Activated B cell treated with CpG ODN at 0.5 μM for 24 hours (primary cell): ENCODE measurements at regions of chr4 and their contacts with region 1.

Region 1: GRCh38 chr4:38675146-38676121 is 11.4 kb downstream of the KLF3 start:
- DNase-seq: peak; percentile 56
- ATAC-seq: peak; percentile 75
- H3K4me3 Mint-ChIP-seq: peak overlapping the region; percentile 53
- H3K27ac Mint-ChIP-seq: peak overlapping the region; percentile 46
- H3K4me1 Mint-ChIP-seq: peaks cover 66% of the 10 kb centered on the region
- H3K27me3 Mint-ChIP-seq: no peaks in the 10 kb centered on the region
- CTCF ChIP-seq: peak; percentile 21

Region 2: DNA sequence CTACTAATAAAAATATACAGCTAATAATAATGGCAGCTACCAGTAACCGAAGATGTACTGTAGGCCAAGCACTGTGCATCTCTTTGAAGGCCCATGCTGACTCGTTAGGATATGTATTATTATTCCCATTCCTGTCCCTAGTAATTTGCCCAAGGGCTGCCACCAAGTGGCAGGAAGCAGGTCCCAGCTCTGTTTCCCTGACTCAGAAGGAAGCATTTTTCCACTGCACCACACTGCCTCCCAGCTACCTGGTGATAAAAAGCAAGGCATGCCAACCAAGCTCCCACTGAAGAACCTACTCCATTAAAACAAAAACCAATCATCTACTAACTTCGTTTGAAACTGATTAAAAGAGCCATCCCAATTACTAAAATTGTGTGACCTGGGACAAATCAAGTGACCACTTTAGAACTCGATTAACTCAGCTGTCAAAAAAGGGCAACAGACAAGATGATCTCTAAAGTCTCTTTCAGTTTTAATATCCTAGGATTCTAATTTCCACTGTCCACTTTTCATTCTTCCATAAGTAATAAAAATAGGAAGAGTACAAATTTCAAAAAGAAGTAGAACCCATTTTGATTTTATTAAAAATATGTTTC is 873.3 kb before region 1 on chr4:
- CTCF ChIA-PET with region 1: no interaction called
- POLR2A ChIA-PET with region 1: no interaction called
- intact Hi-C with region 1: loop called (anchors 5 kb)
- DNase-seq: no peak
- ATAC-seq: no peak
- H3K4me3 Mint-ChIP-seq: no peak overlapping the region
- H3K27ac Mint-ChIP-seq: no peak overlapping the region
- H3K4me1 Mint-ChIP-seq: peaks cover 4% of the 10 kb centered on the region
- H3K27me3 Mint-ChIP-seq: peaks cover 1% of the 10 kb centered on the region
- CTCF ChIP-seq: no peak

Region 3: DNA sequence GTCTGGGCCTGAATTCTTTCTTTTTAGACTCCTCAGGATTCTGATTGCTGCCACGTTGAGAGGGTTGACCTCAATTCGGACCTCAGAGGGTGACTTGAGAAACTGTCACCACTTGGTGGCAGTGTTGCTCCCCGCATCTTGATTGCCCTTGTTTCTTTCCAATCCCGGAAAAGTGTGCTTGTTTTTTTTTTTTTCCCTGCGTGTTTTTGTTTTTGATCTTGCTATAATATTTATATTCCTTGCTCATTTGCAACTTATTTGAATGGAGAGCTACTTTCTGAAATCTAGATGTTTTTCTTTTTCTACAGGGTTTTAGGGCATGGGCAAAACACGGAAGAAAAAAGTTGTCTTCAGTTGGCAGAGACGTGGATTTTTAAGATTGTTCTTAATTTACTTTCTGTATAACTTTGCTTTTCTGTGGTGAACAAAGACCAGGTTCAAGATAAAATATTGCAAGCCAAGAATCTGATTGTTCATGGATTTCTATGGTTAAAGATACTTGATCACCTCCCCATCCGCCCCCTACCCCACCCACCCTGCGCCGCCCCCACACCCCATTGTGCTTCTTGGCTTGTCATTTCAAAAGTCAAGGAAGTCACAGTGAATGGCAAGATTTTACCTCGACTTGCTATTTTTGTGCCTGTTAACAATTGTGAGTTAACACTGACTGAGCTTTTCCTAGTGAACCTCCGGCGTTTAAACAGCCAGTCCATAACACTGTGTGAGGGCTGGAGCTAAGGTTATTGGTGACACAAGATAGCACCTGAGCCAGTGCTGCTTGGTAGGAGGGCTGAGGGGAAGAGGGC is 613.1 kb before region 1 on chr4:
- CTCF ChIA-PET with region 1: interaction called, 5 read pairs
- POLR2A ChIA-PET with region 1: no interaction called
- intact Hi-C with region 1: loop called (anchors 1 kb)
- DNase-seq: no peak
- ATAC-seq: peak; percentile 49
- H3K4me3 Mint-ChIP-seq: peak overlapping the region; percentile 57
- H3K27ac Mint-ChIP-seq: no peak overlapping the region
- H3K4me1 Mint-ChIP-seq: peaks cover 14% of the 10 kb centered on the region
- H3K27me3 Mint-ChIP-seq: no peaks in the 10 kb centered on the region
- CTCF ChIP-seq: peak; percentile 81

Region 4: GRCh38 chr4:38174801-38175200 is 500.6 kb before region 1 on chr4:
- CTCF ChIA-PET with region 1: interaction called, 221 read pairs
- POLR2A ChIA-PET with region 1: interaction called, 7 read pairs
- intact Hi-C with region 1: loop called (anchors 1 kb)
- DNase-seq: no peak
- ATAC-seq: no peak
- H3K4me3 Mint-ChIP-seq: no peak overlapping the region
- H3K27ac Mint-ChIP-seq: no peak overlapping the region
- H3K4me1 Mint-ChIP-seq: peaks cover 30% of the 10 kb centered on the region
- H3K27me3 Mint-ChIP-seq: peaks cover 21% of the 10 kb centered on the region
- CTCF ChIP-seq: no peak

Region 5: GRCh38 chr4:38319456-38320342 is 355.7 kb before region 1 on chr4:
- CTCF ChIA-PET with region 1: interaction called, 57 read pairs
- POLR2A ChIA-PET with region 1: interaction called, 4 read pairs
- intact Hi-C with region 1: loop called (anchors 1 kb)
- DNase-seq: peak; percentile 84
- ATAC-seq: peak; percentile 77
- H3K4me3 Mint-ChIP-seq: peak overlapping the region; percentile 78
- H3K27ac Mint-ChIP-seq: peak overlapping the region; percentile 88
- H3K4me1 Mint-ChIP-seq: peaks cover 28% of the 10 kb centered on the region
- H3K27me3 Mint-ChIP-seq: no peaks in the 10 kb centered on the region
- CTCF ChIP-seq: peak; percentile 72

Region 6: DNA sequence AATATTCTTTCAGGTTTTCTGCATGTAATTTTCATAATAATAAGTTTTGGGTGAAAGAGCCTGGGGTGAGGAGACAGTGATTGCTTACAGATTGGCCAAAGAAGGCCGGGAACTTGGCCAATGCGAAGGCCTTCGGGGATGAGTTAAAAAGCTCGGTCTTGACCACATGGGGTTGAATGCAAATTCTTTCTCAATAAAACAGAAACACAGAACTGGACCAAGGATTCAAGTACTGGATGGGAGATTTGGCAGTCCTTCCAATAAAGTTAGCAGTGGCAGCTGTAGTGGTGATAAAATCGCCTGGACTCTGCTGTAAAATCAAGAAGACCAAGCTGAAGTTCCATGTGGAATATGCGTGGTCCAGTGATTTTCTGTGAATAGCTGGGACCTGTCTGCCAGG is 293.6 kb before region 1 on chr4:
- CTCF ChIA-PET with region 1: no interaction called
- POLR2A ChIA-PET with region 1: no interaction called
- intact Hi-C with region 1: no loop called
- DNase-seq: no peak
- ATAC-seq: no peak
- H3K4me3 Mint-ChIP-seq: no peak overlapping the region
- H3K27ac Mint-ChIP-seq: no peak overlapping the region
- H3K4me1 Mint-ChIP-seq: no peaks in the 10 kb centered on the region
- H3K27me3 Mint-ChIP-seq: peaks cover 1% of the 10 kb centered on the region
- CTCF ChIP-seq: no peak

Region 7: DNA sequence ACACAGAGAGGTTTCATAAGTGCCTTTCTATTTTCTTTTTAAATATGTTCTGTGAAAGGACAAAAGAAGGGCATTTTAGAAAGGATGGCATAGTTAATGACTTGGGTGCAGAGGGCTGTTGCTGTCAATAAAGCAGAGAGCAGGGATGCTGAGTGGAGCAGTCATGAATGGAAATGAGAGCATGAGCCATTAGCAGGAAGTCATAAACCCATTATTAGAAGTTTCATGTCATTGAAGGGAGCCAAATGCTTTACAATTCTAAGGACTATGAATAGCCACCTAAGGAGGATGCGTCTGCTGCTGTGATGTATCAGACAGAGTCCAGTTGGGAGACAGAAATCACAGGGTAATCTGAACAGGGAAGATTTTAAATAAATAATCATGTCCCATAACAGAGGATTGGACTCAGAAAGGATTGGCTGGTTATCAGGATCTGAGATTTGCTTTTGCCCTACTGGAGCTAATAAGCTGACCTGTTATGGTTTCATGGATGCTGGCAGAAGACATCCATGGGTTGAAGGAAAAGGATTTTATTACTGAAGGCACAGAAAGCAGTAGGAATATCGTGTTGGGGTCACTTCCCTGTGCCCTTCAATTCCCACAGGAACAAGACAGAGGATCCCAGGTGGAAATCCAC is 459.4 kb after region 1 on chr4:
- CTCF ChIA-PET with region 1: no interaction called
- POLR2A ChIA-PET with region 1: no interaction called
- intact Hi-C with region 1: loop called (anchors 5 kb)
- DNase-seq: no peak
- ATAC-seq: no peak
- H3K4me3 Mint-ChIP-seq: no peak overlapping the region
- H3K27ac Mint-ChIP-seq: peak overlapping the region; percentile 4
- H3K4me1 Mint-ChIP-seq: peaks cover 12% of the 10 kb centered on the region
- H3K27me3 Mint-ChIP-seq: no peaks in the 10 kb centered on the region
- CTCF ChIP-seq: no peak